B cell (primary cell): ENCODE measurements at regions of chr12 and their contacts with region 1.

Region 1: DNA sequence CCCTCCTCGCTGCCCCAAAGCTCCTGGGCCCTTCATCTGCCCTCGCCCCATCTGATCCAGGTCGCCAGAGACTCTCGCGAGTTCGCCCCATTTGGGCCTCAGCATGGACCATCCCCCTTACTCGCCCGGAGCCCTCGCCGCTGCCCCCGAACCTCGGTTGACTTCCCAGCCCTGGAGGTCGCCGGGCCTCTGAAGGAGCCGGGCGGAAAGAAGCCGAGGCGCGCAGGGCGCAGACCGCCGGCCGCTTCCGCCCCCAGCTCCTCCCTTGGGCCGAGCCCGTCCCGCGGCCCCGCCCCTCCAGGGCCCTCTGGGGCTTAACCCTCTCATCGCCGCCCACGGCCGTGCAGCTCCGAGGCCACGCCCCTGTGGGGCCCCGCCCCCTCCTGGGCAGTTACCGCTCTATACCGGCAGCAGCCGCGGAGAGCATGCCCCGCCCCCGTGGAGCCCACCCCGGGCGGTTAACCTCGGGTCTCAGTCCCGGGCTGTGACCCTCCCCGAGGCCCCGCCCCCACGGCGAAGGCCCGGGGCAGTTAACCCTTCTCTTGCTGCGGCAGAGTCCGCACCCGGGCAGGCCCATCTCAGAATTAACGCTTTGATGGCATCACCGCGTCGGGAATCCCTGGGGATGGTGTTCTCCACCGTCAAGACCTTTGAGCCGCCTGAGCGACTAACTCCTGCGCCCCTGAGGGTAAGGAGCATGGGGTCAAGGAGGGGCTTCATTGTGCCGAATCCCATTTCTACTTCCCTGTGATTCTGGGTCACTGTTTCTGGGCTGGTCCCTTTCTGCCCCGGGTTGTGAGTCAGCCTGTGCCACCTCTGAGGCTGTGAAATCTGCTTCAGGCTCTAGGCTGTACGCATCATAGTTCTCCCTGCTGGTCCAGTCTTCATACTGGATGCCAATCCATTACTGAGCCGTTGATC is at the start of gene SPSB2:
- DNase-seq: peak; percentile 98
- ATAC-seq: peak; percentile 89
- H3K4me3 ChIP-seq: peak within 1 kb of the TSS; percentile 69 to 92 (median 88)
- H3K4me3 Mint-ChIP-seq: peak within 1 kb of the TSS; percentile 90
- H3K27ac ChIP-seq: peak within 1 kb of the TSS; percentile 45 to 61
- H3K27ac Mint-ChIP-seq: peak within 1 kb of the TSS; percentile 93
- H3K4me1 ChIP-seq: peaks cover 29 to 40% of the 10 kb centered on the region in 2 donors
- H3K4me1 Mint-ChIP-seq: peaks cover 40% of the 10 kb centered on the region
- H3K27me3 ChIP-seq: no peaks in the 10 kb centered on the region
- H3K27me3 Mint-ChIP-seq: no peaks in the 10 kb centered on the region
- CTCF ChIP-seq: no peak
- total RNA-seq, gene SPSB2: 13.5 and 16.0 TPM in 2 replicates

Region 2: DNA sequence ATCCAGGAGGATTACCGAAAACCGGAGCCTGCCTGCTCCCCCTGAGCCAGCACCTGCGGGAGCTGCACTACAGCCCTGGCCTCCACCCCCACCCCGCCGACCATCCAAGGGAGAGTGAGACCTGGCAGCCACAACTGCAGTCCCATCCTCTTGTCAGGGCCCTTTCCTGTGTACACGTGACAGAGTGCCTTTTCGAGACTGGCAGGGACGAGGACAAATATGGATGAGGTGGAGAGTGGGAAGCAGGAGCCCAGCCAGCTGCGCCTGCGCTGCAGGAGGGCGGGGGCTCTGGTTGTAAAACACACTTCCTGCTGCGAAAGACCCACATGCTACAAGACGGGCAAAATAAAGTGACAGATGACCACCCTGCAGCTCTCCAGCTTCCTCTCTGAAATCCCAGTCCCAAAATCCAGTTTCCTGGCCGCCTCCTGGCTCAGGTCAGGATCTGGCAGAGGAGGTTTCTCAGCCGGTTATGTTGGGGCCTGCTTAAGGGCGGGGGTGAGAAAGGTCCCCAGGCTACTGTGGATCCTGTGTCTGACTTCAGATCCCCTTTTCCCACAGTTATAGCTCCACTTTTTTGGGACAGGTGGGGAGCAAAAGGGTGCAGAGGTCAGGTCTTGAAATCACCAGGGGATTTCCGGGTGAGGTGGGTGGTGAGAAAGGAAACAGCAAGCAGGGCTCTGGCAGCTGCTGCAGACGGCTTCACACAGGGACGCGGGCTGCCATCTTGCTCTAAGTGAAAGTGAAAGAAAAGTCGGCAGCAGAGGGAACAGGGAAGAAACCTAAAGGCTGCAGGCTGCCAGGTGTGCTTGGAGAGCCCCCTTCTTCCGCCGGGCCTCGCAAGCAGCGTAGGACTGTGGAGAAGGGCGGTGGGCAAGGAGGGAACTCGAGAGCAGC is 421.8 kb before region 1 on chr12 and contains the start of gene TAPBPL:
- CTCF ChIA-PET with region 1: no interaction called
- POLR2A ChIA-PET with region 1: no interaction called
- intact Hi-C with region 1: no loop called
- DNase-seq: peak; percentile 91
- ATAC-seq: peak; percentile 81
- H3K4me3 ChIP-seq: peak within 1 kb of the TSS; percentile 86 to 97 (median 94)
- H3K4me3 Mint-ChIP-seq: peak within 1 kb of the TSS; percentile 97
- H3K27ac ChIP-seq: peak within 1 kb of the TSS; percentile 96 to 98
- H3K27ac Mint-ChIP-seq: peak within 1 kb of the TSS; percentile 99
- H3K4me1 ChIP-seq: peaks cover 33 to 55% of the 10 kb centered on the region in 2 donors
- H3K4me1 Mint-ChIP-seq: peaks cover 64% of the 10 kb centered on the region
- H3K27me3 ChIP-seq: no peaks in the 10 kb centered on the region
- H3K27me3 Mint-ChIP-seq: no peaks in the 10 kb centered on the region
- CTCF ChIP-seq: no peak
- total RNA-seq, gene TAPBPL: 71.2 and 80.5 TPM in 2 replicates

Region 3: GRCh38 chr12:6735448-6736191 is 137.7 kb before region 1 on chr12:
- CTCF ChIA-PET with region 1: no interaction called
- POLR2A ChIA-PET with region 1: no interaction called
- intact Hi-C with region 1: no loop called
- DNase-seq: peak; percentile 51
- ATAC-seq: peak; percentile 68
- H3K4me3 ChIP-seq: no peak overlapping the region
- H3K4me3 Mint-ChIP-seq: no peak overlapping the region
- H3K27ac ChIP-seq: no peak overlapping the region
- H3K27ac Mint-ChIP-seq: no peak overlapping the region
- H3K4me1 ChIP-seq: no peaks in the 10 kb centered on the region
- H3K4me1 Mint-ChIP-seq: no peaks in the 10 kb centered on the region
- H3K27me3 ChIP-seq: no peaks in the 10 kb centered on the region
- H3K27me3 Mint-ChIP-seq: no peaks in the 10 kb centered on the region
- CTCF ChIP-seq: peak; percentile 43

Region 4: GRCh38 chr12:6752921-6753771 is 120.2 kb before region 1 on chr12 and contains the start of gene MLF2:
- CTCF ChIA-PET with region 1: interaction called, 22 read pairs
- POLR2A ChIA-PET with region 1: interaction called, 10 read pairs
- intact Hi-C with region 1: loop called (anchors 2 kb)
- DNase-seq: peak; percentile 98
- ATAC-seq: peak; percentile 87
- H3K4me3 ChIP-seq: peak within 1 kb of the TSS; percentile 75 to 93 (median 79)
- H3K4me3 Mint-ChIP-seq: peak within 1 kb of the TSS; percentile 96
- H3K27ac ChIP-seq: peak within 1 kb of the TSS; percentile 93 to 96
- H3K27ac Mint-ChIP-seq: peak within 1 kb of the TSS; percentile 99
- H3K4me1 ChIP-seq: peaks cover 13 to 14% of the 10 kb centered on the region in 2 donors
- H3K4me1 Mint-ChIP-seq: peaks cover 17% of the 10 kb centered on the region
- H3K27me3 ChIP-seq: no peaks in the 10 kb centered on the region
- H3K27me3 Mint-ChIP-seq: peaks cover 4% of the 10 kb centered on the region
- CTCF ChIP-seq: peak; percentile 89
- total RNA-seq, gene MLF2: 97.2 and 106 TPM in 2 replicates

Region 5: DNA sequence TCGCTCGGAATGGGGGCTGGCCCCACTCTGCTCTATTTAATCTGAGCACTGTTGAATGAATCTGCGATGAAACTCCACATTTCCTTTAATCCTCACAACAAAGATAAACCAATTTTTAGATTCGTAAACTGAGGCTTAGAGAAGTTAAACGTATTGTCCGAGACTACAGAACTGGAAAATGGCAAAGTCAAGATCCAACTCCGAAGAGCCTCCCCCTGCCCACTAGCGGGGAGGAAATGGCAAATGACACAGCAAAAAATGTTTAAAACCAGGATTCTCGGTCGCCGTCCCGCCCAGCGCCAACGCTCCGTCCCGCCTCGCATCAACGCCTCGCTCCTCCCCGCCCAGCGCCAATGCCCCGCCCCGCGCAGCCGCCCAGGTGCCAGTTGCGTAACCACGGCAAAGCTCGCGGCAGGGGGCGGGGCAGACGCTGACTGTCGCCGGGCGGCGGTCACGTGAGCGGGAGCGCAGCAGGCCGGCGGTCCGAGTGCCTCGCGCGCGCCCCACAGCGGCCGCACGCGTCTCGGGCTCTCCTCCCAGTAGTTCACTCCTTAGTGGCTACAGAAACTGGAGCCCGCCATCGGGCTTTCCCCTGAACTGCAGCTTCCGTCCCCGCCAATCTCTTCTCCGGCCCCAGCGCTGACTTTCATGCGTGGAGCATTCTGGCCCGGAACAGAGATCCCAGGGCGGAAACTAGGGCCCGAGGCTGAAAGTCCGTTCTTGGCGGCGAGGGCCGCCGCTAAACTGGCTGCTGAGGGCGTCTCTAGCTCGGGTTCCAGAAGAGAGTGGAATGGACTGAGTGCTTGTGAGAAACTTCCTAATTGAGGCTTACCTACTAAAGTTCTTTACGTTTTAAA is 17.7 kb after region 1 on chr12:
- CTCF ChIA-PET with region 1: interaction called, 77 read pairs
- POLR2A ChIA-PET with region 1: interaction called, 30 read pairs
- intact Hi-C with region 1: loop called (anchors 1 kb)
- DNase-seq: peak; percentile 98
- ATAC-seq: peak; percentile 95
- H3K4me3 ChIP-seq: peak overlapping the region; percentile 61 to 79 (median 76)
- H3K4me3 Mint-ChIP-seq: peak overlapping the region; percentile 87
- H3K27ac ChIP-seq: peak overlapping the region; percentile 93 to 94
- H3K27ac Mint-ChIP-seq: peak overlapping the region; percentile 91
- H3K4me1 ChIP-seq: peaks cover 9 to 13% of the 10 kb centered on the region in 2 donors
- H3K4me1 Mint-ChIP-seq: peaks cover 15% of the 10 kb centered on the region
- H3K27me3 ChIP-seq: no peaks in the 10 kb centered on the region
- H3K27me3 Mint-ChIP-seq: no peaks in the 10 kb centered on the region
- CTCF ChIP-seq: peak; percentile 90

Region 6: DNA sequence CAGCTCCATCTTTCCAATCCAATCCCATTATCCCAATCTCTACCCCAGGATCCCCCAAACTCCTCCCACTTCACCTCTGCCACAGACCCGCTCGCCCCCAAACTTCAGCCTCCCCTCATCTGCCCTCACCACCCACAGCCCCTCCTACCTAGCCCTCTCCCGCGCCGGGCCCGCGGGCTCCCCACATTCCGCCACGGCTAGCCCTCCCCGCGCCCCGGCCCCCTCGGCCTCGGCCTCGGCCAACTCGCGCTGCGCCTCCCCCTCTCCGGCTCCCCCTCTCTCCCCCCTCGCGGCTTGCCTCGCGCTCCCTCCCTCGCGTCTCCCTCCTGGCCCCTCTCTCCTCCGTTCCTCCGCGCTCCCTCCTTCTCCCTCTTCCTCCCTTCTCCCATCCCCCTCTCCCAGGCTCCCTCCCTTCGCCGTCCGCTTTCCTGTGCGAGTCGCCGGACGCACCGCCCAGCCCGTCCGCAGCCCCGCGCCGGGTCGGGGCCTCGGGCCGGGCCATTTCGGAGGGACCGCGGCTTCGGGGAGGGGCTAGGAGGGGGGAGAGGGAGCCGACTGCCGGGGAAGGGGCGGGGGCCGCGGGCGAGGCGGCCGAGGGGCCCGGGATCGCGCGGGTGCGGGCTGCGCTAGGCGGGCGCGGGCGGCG is 54.1 kb after region 1 on chr12 and contains the start of gene ATN1:
- CTCF ChIA-PET with region 1: interaction called, 68 read pairs
- POLR2A ChIA-PET with region 1: interaction called, 6 read pairs
- intact Hi-C with region 1: loop called (anchors 1 kb)
- DNase-seq: peak; percentile 71
- ATAC-seq: peak; percentile 44
- H3K4me3 ChIP-seq: peak within 1 kb of the TSS; percentile 15 to 86 (median 83)
- H3K4me3 Mint-ChIP-seq: peak within 1 kb of the TSS; percentile 88
- H3K27ac ChIP-seq: peak within 1 kb of the TSS; percentile 69 to 84
- H3K27ac Mint-ChIP-seq: peak within 1 kb of the TSS; percentile 97
- H3K4me1 ChIP-seq: peaks cover 36 to 51% of the 10 kb centered on the region in 2 donors
- H3K4me1 Mint-ChIP-seq: peaks cover 56% of the 10 kb centered on the region
- H3K27me3 ChIP-seq: no peaks in the 10 kb centered on the region
- H3K27me3 Mint-ChIP-seq: no peaks in the 10 kb centered on the region
- CTCF ChIP-seq: no peak
- total RNA-seq, gene ATN1: 49.5 and 50.8 TPM in 2 replicates

Region 7: DNA sequence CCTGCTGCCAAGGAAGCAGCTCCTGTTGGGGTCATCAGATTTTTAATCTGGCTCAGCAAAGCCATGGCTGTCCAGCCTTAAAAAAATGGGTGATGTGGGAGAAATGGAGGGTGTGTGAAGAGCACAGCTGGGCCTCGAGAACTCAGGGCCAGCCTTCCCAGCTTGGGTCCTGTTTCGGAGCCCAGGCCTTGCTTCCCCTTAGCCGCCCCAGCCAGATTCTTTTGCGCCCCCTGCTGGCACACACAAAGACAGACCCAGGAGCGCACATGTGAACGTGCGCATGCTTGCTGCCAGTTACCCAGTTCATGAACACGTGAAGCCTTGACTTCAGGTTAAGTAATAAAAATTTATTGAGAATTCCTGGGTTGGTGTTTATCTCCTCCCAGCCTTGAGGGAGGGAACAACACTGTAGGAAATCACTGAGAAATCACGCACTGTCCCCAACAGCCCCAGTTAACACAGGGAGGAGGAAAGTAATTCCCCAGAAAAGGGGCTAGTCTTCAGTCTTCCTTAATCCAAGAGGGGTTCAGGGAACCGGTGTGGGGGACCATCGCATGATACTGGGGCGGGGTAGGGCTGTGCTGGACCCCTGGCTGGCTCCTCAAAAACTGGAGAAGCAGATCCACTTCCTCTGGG is 91.8 kb after region 1 on chr12:
- CTCF ChIA-PET with region 1: interaction called, 110 read pairs
- POLR2A ChIA-PET with region 1: interaction called, 7 read pairs
- intact Hi-C with region 1: loop called (anchors 1 kb)
- DNase-seq: peak; percentile 93
- ATAC-seq: peak; percentile 57
- H3K4me3 ChIP-seq: no peak overlapping the region
- H3K4me3 Mint-ChIP-seq: no peak overlapping the region
- H3K27ac ChIP-seq: peak overlapping the region; percentile 30 to 63
- H3K27ac Mint-ChIP-seq: peak overlapping the region; percentile 91
- H3K4me1 ChIP-seq: peaks cover 58 to 69% of the 10 kb centered on the region in 2 donors
- H3K4me1 Mint-ChIP-seq: peaks cover 63% of the 10 kb centered on the region
- H3K27me3 ChIP-seq: no peaks in the 10 kb centered on the region
- H3K27me3 Mint-ChIP-seq: no peaks in the 10 kb centered on the region
- CTCF ChIP-seq: peak; percentile 88

Region 8: GRCh38 chr12:7108796-7109571 is 235.6 kb after region 1 on chr12 and contains the start of gene C1RL:
- CTCF ChIA-PET with region 1: interaction called, 35 read pairs
- POLR2A ChIA-PET with region 1: interaction called, 5 read pairs
- intact Hi-C with region 1: loop called (anchors 1 kb)
- DNase-seq: peak; percentile 83
- ATAC-seq: peak; percentile 50
- H3K4me3 ChIP-seq: peak within 1 kb of the TSS; percentile 74 to 94 (median 89)
- H3K4me3 Mint-ChIP-seq: peak within 1 kb of the TSS; percentile 97
- H3K27ac ChIP-seq: peak within 1 kb of the TSS; percentile 63 to 76
- H3K27ac Mint-ChIP-seq: peak within 1 kb of the TSS; percentile 98
- H3K4me1 ChIP-seq: peaks cover 12 to 18% of the 10 kb centered on the region in 2 donors
- H3K4me1 Mint-ChIP-seq: peaks cover 28% of the 10 kb centered on the region
- H3K27me3 ChIP-seq: no peaks in the 10 kb centered on the region
- H3K27me3 Mint-ChIP-seq: no peaks in the 10 kb centered on the region
- CTCF ChIP-seq: peak; percentile 92
- total RNA-seq, gene C1RL: 24.9 and 28.9 TPM in 2 replicates

Region 9: DNA sequence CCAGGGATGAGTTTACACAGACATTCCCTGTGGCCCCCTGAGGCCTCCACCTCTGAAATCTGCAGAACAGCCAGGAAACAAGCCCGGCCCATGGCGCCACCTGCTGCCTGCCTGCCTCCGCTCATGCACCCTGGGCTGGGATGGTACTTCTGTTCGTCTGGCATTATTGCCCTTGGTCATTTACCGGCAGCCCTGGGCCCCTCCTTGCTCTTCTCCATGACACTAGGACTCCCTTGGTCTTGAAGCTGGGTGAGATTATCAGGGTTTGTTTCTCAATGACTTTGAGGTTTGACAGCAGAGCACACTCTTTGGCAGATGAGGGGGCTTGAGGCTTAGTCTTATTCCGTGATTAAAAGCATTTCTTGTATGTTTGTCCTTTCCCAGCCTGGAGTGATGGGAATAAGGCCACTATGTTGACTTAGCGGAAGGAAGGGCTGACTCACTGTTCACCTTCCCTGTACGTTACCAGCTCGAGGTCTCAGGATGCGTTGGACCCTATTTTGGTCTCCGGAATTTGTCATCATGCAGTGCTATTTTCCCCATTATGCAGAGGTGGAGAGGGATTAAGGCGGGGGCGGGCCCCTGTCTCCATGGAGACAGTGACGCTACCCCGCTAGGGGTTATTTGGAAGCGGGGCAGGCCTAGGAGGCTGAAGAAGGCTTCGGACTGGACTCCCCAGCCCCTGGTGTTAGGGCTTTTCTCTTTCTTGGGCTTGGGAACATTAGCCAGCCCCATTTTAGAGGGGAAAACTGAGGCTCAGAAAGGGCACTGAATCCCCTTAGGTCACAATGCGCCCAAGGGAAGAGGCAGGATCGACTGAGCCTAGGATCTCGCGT is 315.4 kb after region 1 on chr12:
- CTCF ChIA-PET with region 1: no interaction called
- POLR2A ChIA-PET with region 1: no interaction called
- intact Hi-C with region 1: loop called (anchors 1 kb)
- DNase-seq: peak; percentile 67
- ATAC-seq: peak; percentile 15
- H3K4me3 ChIP-seq: peak overlapping the region; percentile 84 to 98 (median 94)
- H3K4me3 Mint-ChIP-seq: peak overlapping the region; percentile 93
- H3K27ac ChIP-seq: peak overlapping the region; percentile 82 to 85
- H3K27ac Mint-ChIP-seq: peak overlapping the region; percentile 92
- H3K4me1 ChIP-seq: peaks cover 18 to 23% of the 10 kb centered on the region in 2 donors
- H3K4me1 Mint-ChIP-seq: peaks cover 30% of the 10 kb centered on the region
- H3K27me3 ChIP-seq: no peaks in the 10 kb centered on the region
- H3K27me3 Mint-ChIP-seq: no peaks in the 10 kb centered on the region
- CTCF ChIP-seq: peak; percentile 68